Activated CD4-positive, alpha-beta T cell treated with anti-CD3 and anti-CD28 coated beads for 36 hours (primary cell): ENCODE measurements at regions of chr15 and their contacts with region 1.

Region 1: GRCh38 chr15:95078003-95078402 is 846.6 kb downstream of the MCTP2 start:
- DNase-seq: no peak
- ATAC-seq: no peak
- H3K4me3 Mint-ChIP-seq: no peak overlapping the region
- H3K27ac Mint-ChIP-seq: no peak overlapping the region
- H3K4me1 Mint-ChIP-seq: no peaks in the 10 kb centered on the region
- H3K27me3 Mint-ChIP-seq: no peaks in the 10 kb centered on the region

Region 2: DNA sequence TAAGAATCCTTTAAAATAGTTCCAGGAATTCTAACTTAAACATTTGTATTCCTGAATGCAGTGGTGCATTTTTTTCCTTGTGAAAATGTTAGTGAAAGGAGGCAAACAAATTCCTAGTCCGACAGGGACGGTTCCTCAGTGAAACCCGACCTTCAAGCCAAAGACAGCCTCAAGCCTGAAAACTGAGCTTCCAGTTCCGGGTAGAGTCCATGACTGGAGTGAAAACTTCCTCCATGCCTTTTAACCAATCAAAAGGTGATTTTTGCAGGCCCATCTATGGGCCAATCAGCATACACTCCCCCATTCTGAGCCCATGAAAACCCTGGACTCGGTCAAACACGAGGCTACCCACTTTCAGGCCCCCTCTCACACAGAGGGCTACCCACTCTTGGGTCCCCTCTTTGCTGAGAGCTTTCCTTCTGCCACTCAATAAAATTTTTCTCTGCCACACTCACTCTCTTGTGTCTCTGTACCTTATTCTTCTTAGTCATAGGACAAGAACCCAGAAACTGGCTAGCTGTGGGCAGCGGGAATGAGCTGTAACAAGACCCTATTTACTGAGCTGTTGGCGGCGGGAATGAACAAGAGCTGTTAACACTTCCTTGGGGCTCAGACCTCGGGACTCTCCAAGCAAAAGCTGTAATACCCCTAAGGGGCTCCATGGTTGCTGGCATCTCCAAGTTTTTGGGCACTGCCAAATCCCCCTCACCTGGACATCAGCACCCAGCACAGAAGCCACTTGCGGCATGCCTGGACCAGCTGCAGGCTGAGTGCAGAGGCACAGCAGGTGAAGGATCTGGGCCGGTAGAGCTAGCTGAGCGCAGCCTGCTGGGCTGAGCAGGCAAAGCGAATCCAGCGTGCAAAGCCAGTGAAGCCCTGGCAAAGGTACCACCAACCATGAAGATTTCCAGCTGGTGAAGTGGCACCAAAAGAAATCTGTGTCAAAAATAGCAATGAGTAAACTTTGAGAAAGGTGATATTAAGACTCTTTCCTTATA is 247.8 kb before region 1 on chr15:
- CTCF ChIA-PET with region 1: no interaction called
- POLR2A ChIA-PET with region 1: no interaction called
- intact Hi-C with region 1: no loop called
- DNase-seq: no peak
- ATAC-seq: no peak
- H3K4me3 Mint-ChIP-seq: no peak overlapping the region
- H3K27ac Mint-ChIP-seq: no peak overlapping the region
- H3K4me1 Mint-ChIP-seq: no peaks in the 10 kb centered on the region
- H3K27me3 Mint-ChIP-seq: no peaks in the 10 kb centered on the region

Region 3: GRCh38 chr15:95018888-95019545 is 59.0 kb before region 1 on chr15:
- CTCF ChIA-PET with region 1: no interaction called
- POLR2A ChIA-PET with region 1: no interaction called
- intact Hi-C with region 1: loop called in 1 of 2 experiments (anchors 10 kb)
- DNase-seq: peak; percentile 4
- ATAC-seq: peak; percentile 55
- H3K4me3 Mint-ChIP-seq: no peak overlapping the region
- H3K27ac Mint-ChIP-seq: no peak overlapping the region
- H3K4me1 Mint-ChIP-seq: peaks cover 2% of the 10 kb centered on the region
- H3K27me3 Mint-ChIP-seq: no peaks in the 10 kb centered on the region